ENCODE measurements at regions of chr17 and their contacts with region 1.

Region 1: DNA sequence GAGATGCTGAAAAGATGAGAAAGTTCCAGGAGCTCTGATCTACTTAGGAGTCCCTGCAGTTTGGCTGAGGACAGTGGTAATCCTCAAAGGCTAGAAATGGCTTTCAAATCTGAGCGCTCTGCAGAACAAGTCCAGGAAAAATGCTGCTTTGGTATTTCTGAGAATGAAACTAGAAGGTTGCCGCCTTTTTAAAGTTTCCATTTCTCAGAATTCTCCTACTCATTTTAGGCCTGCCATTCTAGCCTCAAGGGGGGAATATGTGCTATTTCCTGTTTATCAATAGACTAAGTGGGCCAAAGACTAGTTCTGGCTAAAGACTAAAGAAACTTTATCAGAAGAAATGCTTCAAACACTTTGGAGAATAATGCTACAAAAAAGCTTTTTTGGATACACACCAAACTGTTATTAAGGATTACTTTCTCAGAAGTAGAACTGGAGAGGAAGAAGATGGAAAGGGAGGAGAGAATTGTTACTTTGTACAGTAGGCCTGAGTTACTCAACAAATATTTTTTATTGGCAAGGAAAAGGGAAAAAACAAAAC is at the start of gene SLFN12L:
- DNase-seq: no peak
- ATAC-seq: peak; percentile 36
- total RNA-seq, gene SLFN12L: 0.32 TPM

Region 2: DNA sequence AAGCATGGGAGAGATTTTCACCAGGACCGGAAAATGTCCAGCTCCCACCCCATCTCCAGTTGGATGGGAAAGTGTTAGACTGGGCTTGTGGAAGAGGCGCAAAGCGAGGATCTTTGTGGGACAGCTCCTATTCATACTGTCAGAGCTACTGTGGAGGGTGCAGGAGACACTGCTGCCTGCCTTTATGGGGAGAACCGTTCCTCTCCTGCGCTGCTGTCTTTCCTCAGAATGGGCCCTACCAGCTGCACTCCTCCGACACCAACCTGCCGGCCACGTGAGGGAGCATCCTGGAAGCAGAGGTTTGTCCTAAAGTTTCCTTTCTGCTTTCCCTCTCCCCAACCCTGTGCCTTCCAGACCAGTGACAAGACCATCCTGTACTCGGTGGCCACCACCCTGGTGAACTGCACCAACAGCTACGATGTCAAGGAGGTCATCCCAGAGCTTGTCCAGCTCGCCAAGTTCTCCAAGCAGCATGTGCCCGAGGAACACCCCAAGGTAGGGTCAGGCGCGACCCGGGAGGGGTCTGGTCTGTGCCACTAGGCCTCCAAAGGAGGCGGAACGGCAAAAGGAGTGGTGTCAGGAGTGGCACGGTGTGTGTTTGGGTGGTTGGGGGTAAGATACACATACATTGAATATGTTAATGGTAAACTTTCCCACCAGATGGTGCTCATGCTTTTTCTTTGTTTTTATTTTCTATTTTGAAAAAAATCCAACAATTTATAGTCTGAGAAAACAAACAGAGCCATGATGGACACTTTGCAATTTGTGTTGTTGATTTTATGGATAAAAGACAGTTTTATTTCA is 366.5 kb before region 1 on chr17:
- intact Hi-C with region 1: loop called (anchors 2 kb)
- DNase-seq: no peak
- ATAC-seq: no peak

Region 3: GRCh38 chr17:35242805-35243560 is 294.7 kb before region 1 on chr17 and contains the start of gene SLFN5:
- intact Hi-C with region 1: loop called (anchors 2 kb)
- DNase-seq: peak; percentile 96
- ATAC-seq: peak; percentile 97
- total RNA-seq, gene SLFN5: 11.2 TPM

Region 4: DNA sequence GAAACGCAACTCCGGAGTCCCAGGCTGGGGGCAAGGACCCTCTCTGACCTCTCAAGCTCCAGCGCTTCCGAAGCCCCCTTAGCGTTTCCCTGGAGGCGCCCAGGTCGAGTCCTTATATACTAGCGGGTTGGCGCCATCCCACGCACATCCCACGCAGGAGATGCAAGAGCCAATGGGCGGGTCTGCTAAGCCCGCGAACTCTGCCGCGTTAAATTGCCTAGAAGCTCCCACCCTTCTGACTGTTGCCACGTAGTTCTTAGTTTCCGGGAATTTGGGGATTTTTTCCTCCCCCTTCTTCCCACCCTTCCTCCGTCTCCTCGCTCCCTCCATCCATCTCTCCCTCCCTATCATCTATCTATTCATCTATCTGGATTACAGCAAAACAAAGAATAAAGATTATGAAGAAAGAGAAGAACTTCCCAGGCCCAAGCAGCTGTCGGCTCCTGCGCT is 164.1 kb before region 1 on chr17 and contains the start of gene SLFN11:
- intact Hi-C with region 1: loop called (anchors 5 kb)
- DNase-seq: peak; percentile 92
- ATAC-seq: peak; percentile 95
- total RNA-seq, gene SLFN11: 18.1 TPM

Measured in Right ventricle myocardium inferior (tissue), 1 donor.